Sciatic nerve (tissue), 2 donors: ENCODE measurements at regions of chr3 and their contacts with region 1.

Region 1: DNA sequence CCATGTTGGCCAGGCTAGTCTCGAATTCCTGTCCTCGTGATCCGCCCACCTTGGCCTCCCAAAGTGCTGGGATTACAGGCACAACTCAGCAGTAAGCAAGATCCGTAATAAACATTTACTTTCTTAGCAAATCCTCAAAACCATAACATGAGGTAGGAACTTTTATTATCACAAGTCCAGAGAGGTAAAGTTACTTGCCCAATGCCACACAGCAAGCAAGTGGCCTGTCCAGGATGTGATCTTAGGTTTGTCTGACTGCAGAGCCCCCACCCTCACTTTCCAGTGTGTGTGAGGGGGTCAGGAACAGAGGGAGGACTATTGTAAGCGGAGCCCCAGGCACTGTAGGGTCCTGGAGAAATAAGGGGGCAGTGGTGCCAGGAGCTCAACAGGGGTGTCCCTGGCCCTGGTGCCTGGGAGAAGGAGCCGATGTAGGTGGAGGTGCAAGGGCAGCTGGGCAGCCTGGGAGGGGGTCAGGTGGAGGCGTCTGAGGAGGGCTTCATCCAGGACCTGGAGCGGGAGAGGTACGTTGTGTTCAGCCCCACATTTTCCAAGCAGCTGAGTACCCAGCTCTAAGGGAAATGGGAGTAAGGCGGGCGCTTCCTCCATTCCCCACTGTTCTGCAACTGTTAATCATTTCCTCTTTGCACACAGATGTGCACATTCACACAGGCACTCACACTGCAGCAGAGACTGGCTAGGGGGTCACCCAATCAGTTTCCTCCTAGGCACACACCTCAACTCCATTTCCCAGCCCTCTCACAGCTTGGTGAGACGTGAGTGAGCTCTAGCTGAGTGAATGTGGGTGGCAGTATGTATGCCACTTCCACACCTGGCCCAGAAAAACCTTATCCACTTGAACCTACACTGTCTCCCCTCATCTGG is 5.9 kb downstream of the RPUSD3 start:
- DNase-seq: no peak
- ATAC-seq: no peak

Region 2: GRCh38 chr3:8678751-8679150 is 1159.2 kb before region 1 on chr3:
- intact Hi-C with region 1: no loop called
- DNase-seq: no peak
- ATAC-seq: no peak

Region 3: GRCh38 chr3:9876991-9877390 is 39.0 kb after region 1 on chr3:
- intact Hi-C with region 1: loop called (anchors 2 kb)
- DNase-seq: no peak
- ATAC-seq: no peak